ENCODE measurements at regions of chr2 and their contacts with region 1.

Region 1: GRCh38 chr2:241844066-241844728 is 14.5 kb downstream of the PDCD1 start:
- DNase-seq: peak; percentile 74
- H3K4me3 Mint-ChIP-seq: peak overlapping the region; percentile 65
- H3K27ac Mint-ChIP-seq: peak overlapping the region; percentile 86
- H3K4me1 Mint-ChIP-seq: peaks cover 33% of the 10 kb centered on the region
- H3K27me3 Mint-ChIP-seq: peaks cover 9% of the 10 kb centered on the region

Region 2: GRCh38 chr2:241532733-241533601 is 311.2 kb before region 1 on chr2:
- CTCF ChIA-PET with region 1: no interaction called
- POLR2A ChIA-PET with region 1: no interaction called
- DNase-seq: no peak
- H3K4me3 Mint-ChIP-seq: no peak overlapping the region
- H3K27ac Mint-ChIP-seq: peak overlapping the region; percentile 64
- H3K4me1 Mint-ChIP-seq: no peaks in the 10 kb centered on the region
- H3K27me3 Mint-ChIP-seq: no peaks in the 10 kb centered on the region

Region 3: DNA sequence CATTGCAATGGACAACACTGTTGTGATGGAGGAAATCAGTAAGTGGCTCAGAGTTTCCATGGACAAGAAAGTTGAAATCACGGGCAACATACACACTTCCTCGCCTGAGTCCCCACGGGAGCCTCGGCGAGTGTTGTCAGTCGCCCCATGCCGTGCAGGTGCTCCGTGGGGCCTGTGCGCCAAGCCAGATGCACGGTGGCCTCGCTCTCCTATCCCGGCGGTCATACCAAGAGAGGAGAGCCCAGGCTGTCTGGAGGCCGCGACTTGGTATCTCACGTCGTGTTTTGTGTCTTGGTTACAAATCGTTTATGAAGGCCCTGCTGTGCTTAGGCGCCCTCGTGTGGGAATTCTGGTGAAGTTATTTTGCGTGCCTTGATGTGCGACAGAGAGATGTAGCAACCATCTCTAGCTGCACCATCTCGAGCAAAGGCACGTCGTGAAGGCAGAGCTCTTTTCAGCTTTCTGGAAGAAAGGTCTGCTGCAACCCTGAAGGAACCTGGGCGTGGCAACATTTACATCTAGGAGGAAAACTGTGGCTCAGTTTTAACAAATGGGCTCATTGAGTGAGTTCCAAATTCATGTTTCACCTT is 185.0 kb before region 1 on chr2:
- CTCF ChIA-PET with region 1: no interaction called
- POLR2A ChIA-PET with region 1: no interaction called
- DNase-seq: peak; percentile 61
- H3K4me3 Mint-ChIP-seq: no peak overlapping the region
- H3K27ac Mint-ChIP-seq: no peak overlapping the region
- H3K4me1 Mint-ChIP-seq: no peaks in the 10 kb centered on the region
- H3K27me3 Mint-ChIP-seq: no peaks in the 10 kb centered on the region

Region 4: GRCh38 chr2:241859436-241860183 is 15.4 kb after region 1 on chr2:
- CTCF ChIA-PET with region 1: interaction called, 10 read pairs
- POLR2A ChIA-PET with region 1: no interaction called
- DNase-seq: peak; percentile 56
- H3K4me3 Mint-ChIP-seq: peak overlapping the region; percentile 54
- H3K27ac Mint-ChIP-seq: peak overlapping the region; percentile 90
- H3K4me1 Mint-ChIP-seq: peaks cover 50% of the 10 kb centered on the region
- H3K27me3 Mint-ChIP-seq: peaks cover 6% of the 10 kb centered on the region

Measured in activated CD4-positive, alpha-beta T cell treated with anti-CD3 and anti-CD28 coated beads, Interleukin-2, amount 10 ng/mL, durations not matched to agents 7 days and 5 days (primary cell).